Activated T-helper 1 cell treated with anti-CD3 and anti-CD28 coated beads, Interleukin-12 subunit alpha, Interleukin-12 subunit beta, Interleukin-2, Interleukin-4 antibody, amounts not matched to agents 30 ng/mL and 10 ng/mL and 1 ng/mL, durations not matched to agents 14 hours and 24 hours and 36 hours (primary cell): ENCODE measurements at regions of chr2 and their contacts with region 1.

Region 1: GRCh38 chr2:204325468-204325867 is 219.8 kb upstream of the PARD3B start:
- DNase-seq: peak; percentile 55
- H3K4me3 Mint-ChIP-seq: no peak overlapping the region
- H3K27ac Mint-ChIP-seq: no peak overlapping the region
- H3K4me1 Mint-ChIP-seq: peaks cover 5% of the 10 kb centered on the region
- H3K27me3 Mint-ChIP-seq: peaks cover 14% of the 10 kb centered on the region

Region 2: DNA sequence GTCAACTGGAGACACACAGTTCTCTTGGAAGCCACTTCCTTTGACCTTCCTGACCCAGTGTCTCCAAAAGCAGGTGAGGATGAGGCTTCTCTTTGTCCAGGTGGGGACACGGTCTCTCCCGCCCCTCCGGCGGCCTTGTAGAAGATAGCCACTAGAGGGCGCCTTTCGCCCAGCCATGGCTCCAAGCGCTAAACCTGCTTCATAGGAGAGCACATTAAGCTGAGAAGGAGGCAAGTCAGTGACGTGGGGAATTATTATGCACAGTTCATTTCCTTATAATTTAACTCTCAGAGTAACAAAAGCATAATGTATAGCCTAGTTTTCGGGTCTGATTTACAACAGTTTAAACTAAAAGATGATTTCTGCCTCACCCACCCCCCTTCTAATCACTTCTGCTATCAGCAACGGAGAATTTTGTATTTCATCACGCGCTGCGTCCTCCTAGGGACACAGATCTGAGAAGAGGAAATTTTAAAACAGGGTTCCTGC is 180.2 kb before region 1 on chr2:
- intact Hi-C with region 1: loop called (anchors 2 kb)
- DNase-seq: peak; percentile 71
- H3K4me3 Mint-ChIP-seq: peak overlapping the region; percentile 79
- H3K27ac Mint-ChIP-seq: peak overlapping the region; percentile 63
- H3K4me1 Mint-ChIP-seq: peaks cover 15% of the 10 kb centered on the region
- H3K27me3 Mint-ChIP-seq: peaks cover 8% of the 10 kb centered on the region

Region 3: GRCh38 chr2:204860274-204860673 is 534.8 kb after region 1 on chr2:
- intact Hi-C with region 1: loop called (anchors 10 kb)
- DNase-seq: no peak
- H3K4me3 Mint-ChIP-seq: no peak overlapping the region
- H3K27ac Mint-ChIP-seq: no peak overlapping the region
- H3K4me1 Mint-ChIP-seq: no peaks in the 10 kb centered on the region
- H3K27me3 Mint-ChIP-seq: peaks cover 33% of the 10 kb centered on the region

Region 4: DNA sequence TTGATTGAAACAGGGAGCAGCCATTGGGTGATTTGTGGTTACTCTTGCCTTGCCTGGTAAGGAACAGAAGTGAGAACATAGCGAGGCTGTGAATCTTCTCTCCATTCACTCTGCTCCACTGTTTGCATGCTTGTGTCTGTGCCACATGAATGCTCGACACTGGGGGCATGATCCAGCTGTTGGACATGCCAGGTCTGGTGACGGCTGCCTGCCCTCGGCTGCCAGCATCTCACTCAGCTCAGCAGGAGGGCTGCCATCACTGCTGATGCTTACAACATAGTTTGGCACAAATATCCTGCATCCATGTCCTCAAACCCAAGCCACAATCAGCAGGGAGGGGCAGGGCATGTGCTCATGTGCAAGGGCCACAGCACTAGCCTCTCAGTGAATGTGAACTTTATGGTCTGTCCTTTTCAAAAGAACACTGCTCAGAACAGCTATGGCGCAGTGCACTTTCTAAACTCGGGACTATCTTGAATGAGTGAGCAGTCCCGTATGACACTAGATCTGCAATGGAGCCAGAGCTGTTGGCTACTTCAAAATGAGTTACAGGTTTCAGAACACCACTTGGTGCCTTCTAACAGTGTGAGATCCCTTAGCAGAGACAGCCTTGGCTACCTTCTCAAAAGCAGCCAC is 1483.1 kb after region 1 on chr2:
- intact Hi-C with region 1: loop called (anchors 1 kb)
- DNase-seq: no peak
- H3K4me3 Mint-ChIP-seq: no peak overlapping the region
- H3K27ac Mint-ChIP-seq: no peak overlapping the region
- H3K4me1 Mint-ChIP-seq: no peaks in the 10 kb centered on the region
- H3K27me3 Mint-ChIP-seq: peaks cover 12% of the 10 kb centered on the region

Region 5: GRCh38 chr2:205925373-205926337 is 1600.2 kb after region 1 on chr2:
- intact Hi-C with region 1: loop called (anchors 1 kb)
- DNase-seq: peak; percentile 46
- H3K4me3 Mint-ChIP-seq: peak overlapping the region; percentile 4
- H3K27ac Mint-ChIP-seq: no peak overlapping the region
- H3K4me1 Mint-ChIP-seq: peaks cover 14% of the 10 kb centered on the region
- H3K27me3 Mint-ChIP-seq: peaks cover 30% of the 10 kb centered on the region